ENCODE measurements at regions of chr13 and their contacts with region 1.

Region 1: DNA sequence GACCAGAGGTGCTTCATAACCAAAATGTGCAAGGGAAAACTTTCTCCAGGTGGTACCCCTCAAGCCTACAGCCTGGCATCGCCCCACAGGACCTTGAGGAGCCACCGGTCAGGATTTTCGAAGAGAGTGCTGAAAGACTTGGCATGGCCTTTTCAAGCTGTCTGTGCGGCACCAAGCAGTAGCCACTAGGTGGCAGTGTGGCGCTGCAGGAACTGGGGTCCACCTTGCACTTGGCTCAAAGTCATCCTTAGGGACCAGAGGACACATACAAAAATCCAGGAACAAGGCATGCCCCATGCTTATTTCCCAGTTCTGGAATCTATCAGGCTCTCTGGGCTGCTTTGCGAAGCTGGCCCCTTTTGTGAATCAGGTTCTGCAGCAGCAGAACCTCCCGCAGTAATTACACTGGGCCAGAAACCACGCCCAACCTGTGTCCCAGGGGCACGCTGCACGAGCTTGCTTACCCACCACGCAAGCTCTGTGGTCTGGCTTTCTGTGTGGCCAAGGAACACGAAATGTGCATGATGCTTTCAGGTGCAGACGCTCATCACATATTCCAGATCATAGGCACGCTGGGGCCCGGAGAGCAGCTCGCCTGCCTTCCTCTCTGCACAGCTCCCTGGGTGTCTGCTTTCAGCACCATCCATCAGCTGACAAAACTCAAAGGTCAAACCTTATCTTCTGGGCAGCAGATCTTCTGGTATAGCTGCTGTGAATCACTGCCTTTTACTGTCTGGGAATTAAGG is 87.2 kb downstream of the SLC7A1 start:
- DNase-seq: peak; percentile 94
- H3K4me3 ChIP-seq: no peak overlapping the region
- H3K27ac ChIP-seq: peak overlapping the region in 3 of 4 donors; percentile 31 to 61 (median 36)
- H3K4me1 ChIP-seq: peaks cover 9 to 38% (median 36%) of the 10 kb centered on the region in 4 donors
- H3K27me3 ChIP-seq: peaks cover 0 to 22% (median 0%) of the 10 kb centered on the region in 4 donors
- CTCF ChIP-seq: peak; percentile 87 to 99 (median 93)
- EP300 ChIP-seq: no peak
- POLR2A ChIP-seq: no peak

Region 2: GRCh38 chr13:28719227-28720055 is 788.9 kb before region 1 on chr13:
- intact Hi-C with region 1: no loop called
- DNase-seq: no peak
- H3K4me3 ChIP-seq: peak overlapping the region; percentile 64 to 77 (median 69)
- H3K27ac ChIP-seq: peak overlapping the region; percentile 87 to 96 (median 93)
- H3K4me1 ChIP-seq: peaks cover 18 to 34% (median 26%) of the 10 kb centered on the region in 4 donors
- H3K27me3 ChIP-seq: no peaks in the 10 kb centered on the region
- CTCF ChIP-seq: no peak
- EP300 ChIP-seq: no peak
- POLR2A ChIP-seq: no peak

Region 3: GRCh38 chr13:29707876-29708543 is 199.7 kb after region 1 on chr13:
- intact Hi-C with region 1: loop called (anchors 10 kb)
- DNase-seq: no peak
- H3K4me3 ChIP-seq: no peak overlapping the region
- H3K27ac ChIP-seq: no peak overlapping the region
- H3K4me1 ChIP-seq: no peaks in the 10 kb centered on the region
- H3K27me3 ChIP-seq: no peaks in the 10 kb centered on the region
- CTCF ChIP-seq: peak; percentile 30 to 38 (median 35)
- EP300 ChIP-seq: no peak
- POLR2A ChIP-seq: no peak

Measured in esophagus muscularis mucosa (tissue), 4 donors.